HEK293T (cell line): ENCODE measurements at regions of chr22 and their contacts with region 1.

Region 1: DNA sequence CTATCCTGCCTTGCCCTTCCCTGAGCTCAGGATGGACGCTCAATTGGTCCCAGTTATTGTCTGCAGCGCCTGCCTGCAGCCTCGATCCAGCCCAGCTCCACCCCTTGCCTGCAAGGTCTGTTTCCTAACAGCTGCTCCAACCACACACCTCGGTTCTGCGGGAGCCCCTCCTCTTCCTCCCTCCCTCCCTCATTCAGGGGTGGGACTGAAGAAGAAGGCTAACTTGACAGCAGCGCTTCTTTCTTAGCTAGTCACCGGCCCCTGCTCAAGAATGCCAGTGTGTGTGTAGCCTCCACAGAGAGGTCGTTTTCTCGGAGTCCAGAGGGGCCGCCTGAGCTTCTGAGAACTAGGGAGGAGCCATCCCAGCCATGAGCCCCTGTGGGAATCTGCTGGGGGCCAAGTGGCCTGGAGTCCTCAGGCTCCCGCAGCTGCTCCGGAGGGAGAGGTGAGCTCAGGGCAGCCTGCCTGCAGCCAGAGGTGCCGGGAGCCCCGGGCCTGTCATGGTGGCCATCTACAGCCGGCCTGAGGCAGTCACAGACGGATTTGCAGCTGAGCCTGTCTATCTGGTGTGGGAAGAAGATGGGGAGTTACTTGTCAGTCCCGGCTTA is 36.1 kb downstream of the LIMK2 start:
- DNase-seq: peak; percentile 85

Region 2: GRCh38 chr22:31192513-31192912 is 55.7 kb before region 1 on chr22:
- CTCF ChIA-PET with region 1: no interaction called
- POLR2A ChIA-PET with region 1: no interaction called
- DNase-seq: no peak

Region 3: DNA sequence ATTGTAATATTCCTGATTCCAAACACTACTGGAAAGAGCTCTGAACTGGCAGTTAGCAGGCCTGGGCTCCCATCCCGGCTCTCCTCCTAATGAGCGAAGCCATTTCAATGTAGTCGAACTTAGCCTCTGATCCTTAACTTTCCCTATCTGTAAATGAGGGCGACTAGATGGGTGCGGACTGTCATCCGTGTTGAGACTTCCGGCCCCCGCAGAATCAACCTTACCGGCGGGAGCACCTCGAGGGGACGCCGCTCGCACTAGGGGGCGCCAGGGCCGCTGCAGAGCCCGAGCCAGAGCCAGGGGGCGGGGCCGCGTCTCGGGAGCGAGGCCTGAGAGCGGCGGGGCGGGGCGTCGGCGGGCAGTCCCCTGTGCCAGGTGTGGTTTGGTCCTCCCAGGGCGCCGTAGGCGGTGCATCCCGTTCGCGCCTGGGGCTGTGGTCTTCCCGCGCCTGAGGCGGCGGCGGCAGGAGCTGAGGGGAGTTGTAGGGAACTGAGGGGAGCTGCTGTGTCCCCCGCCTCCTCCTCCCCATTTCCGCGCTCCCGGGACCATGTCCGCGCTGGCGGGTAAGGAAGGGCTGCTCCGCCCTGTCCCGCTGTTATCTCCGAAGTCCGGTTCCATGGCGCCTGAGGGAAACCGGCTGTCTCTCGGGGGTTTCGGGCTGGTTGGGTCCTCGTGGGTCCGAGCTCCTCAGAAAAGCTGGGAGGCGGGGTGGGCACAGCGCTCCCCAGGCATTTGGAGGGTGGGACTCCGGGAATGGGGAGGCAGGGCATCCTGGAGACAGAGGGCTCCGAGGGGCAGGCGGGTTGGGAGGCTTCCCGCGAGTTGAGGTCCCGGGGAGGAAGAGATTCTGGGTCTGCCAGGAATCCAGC is 36.1 kb before region 1 on chr22 and contains the start of gene LIMK2:
- CTCF ChIA-PET with region 1: no interaction called
- POLR2A ChIA-PET with region 1: no interaction called
- DNase-seq: peak; percentile 99

Region 4: GRCh38 chr22:31262312-31263080 is 14.3 kb after region 1 on chr22:
- CTCF ChIA-PET with region 1: no interaction called
- POLR2A ChIA-PET with region 1: no interaction called
- DNase-seq: no peak

Region 5: DNA sequence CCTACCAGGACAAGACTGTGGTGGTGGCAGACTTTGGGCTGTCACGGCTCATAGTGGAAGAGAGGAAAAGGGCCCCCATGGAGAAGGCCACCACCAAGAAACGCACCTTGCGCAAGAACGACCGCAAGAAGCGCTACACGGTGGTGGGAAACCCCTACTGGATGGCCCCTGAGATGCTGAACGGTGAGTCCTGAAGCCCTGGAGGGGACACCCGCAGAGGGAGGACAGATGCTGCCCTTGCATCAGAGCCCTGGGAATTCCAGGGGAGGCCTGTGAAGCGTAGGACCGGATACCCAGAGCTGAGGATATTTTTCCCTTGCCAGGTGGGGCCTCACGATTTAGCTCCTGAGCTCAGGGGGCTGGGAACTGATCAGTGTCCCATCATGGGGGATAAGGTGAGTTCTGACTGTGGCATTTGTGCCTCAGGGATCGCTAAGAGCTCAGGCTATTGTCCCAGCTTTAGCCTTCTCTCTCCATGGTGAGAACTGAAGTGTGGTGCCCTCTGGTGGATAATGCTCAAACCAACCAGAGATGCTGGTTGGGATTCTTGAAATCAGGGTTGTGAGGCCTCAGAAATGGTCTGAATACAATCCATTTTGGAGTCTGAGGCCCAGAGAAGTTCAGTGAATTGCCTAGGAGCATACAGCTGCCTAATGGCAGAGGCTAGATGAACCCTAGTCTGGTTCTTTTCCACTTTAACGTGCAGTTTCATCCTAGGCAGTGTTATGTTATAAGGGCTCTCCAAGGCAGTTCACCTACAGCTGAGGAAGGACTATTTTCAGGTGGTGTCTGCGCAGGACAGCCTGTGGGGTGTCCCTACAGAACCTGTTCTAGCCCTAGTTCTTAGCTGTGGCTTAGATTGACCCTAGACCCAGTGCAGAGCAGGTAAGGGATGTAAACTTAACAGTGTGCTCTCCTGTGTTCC is 24.5 kb after region 1 on chr22:
- CTCF ChIA-PET with region 1: interaction called, 12 read pairs
- POLR2A ChIA-PET with region 1: interaction called, 3 read pairs
- DNase-seq: peak; percentile 81